A549 (cell line): ENCODE measurements at regions of chr1 and their contacts with region 1.

Region 1: DNA sequence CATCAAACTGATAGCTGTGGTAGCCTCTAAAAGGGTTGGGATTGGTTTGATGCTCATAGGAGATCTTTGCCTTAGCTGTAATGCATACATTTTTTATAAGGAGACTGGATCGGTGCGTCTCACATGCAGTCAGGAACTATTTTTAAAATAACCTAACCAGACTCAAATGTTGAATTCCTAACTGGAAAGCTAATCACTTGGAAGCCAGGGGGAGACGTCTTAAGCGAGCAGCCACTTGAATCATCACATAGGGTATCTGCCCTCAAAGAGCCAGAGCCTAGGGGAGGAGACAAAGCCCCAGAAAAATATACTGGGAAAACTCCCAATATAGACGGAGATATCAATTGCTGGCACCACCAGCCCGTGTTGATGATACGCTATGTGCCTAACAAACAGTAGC is 61.7 kb upstream of the PUM1 start:
- DNase-seq: no peak
- ATAC-seq: no peak
- H3K4me3 ChIP-seq: no peak overlapping the region
- H3K27ac ChIP-seq: no peak overlapping the region
- H3K4me1 ChIP-seq: no peaks in the 10 kb centered on the region
- CTCF ChIP-seq: no peak
- EP300 ChIP-seq: no peak
- POLR2A ChIP-seq: no peak
- RAD21 ChIP-seq: no peak

Region 2: DNA sequence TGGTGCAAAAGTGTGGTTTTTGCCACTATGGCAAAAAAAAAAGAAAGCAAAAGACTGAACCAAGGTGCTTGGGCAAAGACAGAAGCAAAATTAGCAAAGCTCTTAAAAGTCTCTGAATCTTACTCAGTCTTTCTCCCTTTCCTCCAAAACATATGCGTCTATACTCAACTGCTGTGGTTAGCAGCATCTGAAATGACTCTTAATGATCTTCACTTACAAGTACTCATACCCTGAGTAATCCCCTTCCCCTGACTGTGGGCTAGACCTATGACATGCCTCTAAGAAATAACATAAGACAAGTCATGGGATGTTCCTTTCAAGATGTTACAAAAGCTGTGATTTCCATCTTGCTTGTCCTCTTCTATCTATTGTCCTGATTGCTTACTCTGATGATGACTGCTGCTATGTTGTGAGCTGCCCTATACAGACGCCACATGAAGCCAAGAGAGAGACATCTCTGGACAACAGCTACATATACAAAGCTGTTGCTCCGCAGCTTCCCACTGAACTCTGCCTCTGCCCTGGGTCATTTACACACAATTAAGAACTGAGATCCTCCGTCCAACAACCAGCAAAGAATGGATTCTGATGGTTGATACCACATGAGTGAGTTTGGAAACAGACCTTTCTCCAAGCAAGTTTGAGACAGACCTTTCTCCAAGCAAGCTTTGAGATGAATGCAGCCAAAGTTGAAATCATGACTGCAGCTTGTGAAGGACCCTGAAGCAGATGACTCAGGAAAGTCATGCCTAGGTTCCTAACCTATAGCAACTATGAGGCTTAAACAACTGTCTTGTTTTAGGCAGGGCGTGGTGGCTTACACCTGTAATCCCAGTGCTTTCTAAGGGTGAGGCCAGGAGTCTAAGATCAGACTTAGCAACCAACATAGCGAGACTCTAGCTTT is 116.9 kb before region 1 on chr1:
- CTCF ChIA-PET with region 1: no interaction called
- POLR2A ChIA-PET with region 1: no interaction called
- DNase-seq: no peak
- ATAC-seq: peak in 1 of 2 experiments; percentile 54; a peak in 4 of 6 replicates
- H3K4me3 ChIP-seq: no peak overlapping the region
- H3K27ac ChIP-seq: no peak overlapping the region
- H3K4me1 ChIP-seq: peaks cover 61% of the 10 kb centered on the region
- CTCF ChIP-seq: no peak
- EP300 ChIP-seq: no peak
- POLR2A ChIP-seq: no peak
- RAD21 ChIP-seq: no peak

Region 3: GRCh38 chr1:31111290-31111977 is 15.8 kb before region 1 on chr1:
- CTCF ChIA-PET with region 1: no interaction called
- POLR2A ChIA-PET with region 1: interaction called, 10 read pairs
- DNase-seq: peak in 1 of 2 experiments; percentile 52
- ATAC-seq: peak; percentile 45 to 56; a peak in 4 of 6 replicates
- H3K4me3 ChIP-seq: no peak overlapping the region
- H3K27ac ChIP-seq: peak overlapping the region in 1 of 2 experiments; percentile 72; a peak in 3 of 6 replicates
- H3K4me1 ChIP-seq: peaks cover 9% of the 10 kb centered on the region
- CTCF ChIP-seq: no peak
- EP300 ChIP-seq: no peak
- POLR2A ChIP-seq: no peak
- RAD21 ChIP-seq: no peak

Region 4: DNA sequence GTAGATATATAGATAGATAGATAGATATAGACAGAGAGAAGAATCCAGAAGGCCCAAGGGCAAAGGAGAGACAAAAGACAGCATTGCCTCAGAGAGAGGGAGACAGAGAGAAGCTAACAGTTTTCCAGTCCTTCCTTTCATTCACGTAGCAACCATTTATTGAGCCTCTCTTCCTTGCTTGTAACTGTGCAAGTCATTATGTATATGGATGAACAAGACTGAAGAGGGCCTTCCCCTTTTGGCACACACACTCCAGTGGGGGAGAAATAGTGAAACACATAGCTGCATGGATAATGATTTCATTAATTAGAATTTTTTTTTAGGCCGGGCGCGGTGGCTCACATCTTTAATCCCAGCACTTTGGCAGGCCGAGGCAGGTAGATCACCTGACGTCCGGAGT is 13.0 kb after region 1 on chr1:
- CTCF ChIA-PET with region 1: no interaction called
- POLR2A ChIA-PET with region 1: no interaction called
- DNase-seq: no peak
- ATAC-seq: no peak
- H3K4me3 ChIP-seq: no peak overlapping the region
- H3K27ac ChIP-seq: no peak overlapping the region
- H3K4me1 ChIP-seq: no peaks in the 10 kb centered on the region
- CTCF ChIP-seq: no peak
- EP300 ChIP-seq: no peak
- POLR2A ChIP-seq: no peak
- RAD21 ChIP-seq: no peak